GM10248 (cell line): ENCODE measurements at regions of chr3 and their contacts with region 1.

Region 1: GRCh38 chr3:38190481-38190881 is 25.1 kb downstream of the OXSR1 start:
- DNase-seq: no peak
- CTCF ChIP-seq: no peak

Region 2: GRCh38 chr3:38157117-38157516 is 33.4 kb before region 1 on chr3:
- CTCF ChIA-PET with region 1: no interaction called
- POLR2A ChIA-PET with region 1: no interaction called
- DNase-seq: no peak
- CTCF ChIP-seq: no peak

Region 3: GRCh38 chr3:38210141-38210757 is 19.8 kb after region 1 on chr3:
- CTCF ChIA-PET with region 1: interaction called, 18 read pairs
- POLR2A ChIA-PET with region 1: no interaction called
- DNase-seq: peak; percentile 41
- CTCF ChIP-seq: no peak